B cell (primary cell): ENCODE measurements at regions of chr11 and their contacts with region 1.

Region 1: GRCh38 chr11:67167086-67167485 is 48.0 kb downstream of the KDM2A start:
- DNase-seq: no peak
- ATAC-seq: no peak
- H3K4me3 ChIP-seq: no peak overlapping the region
- H3K4me3 Mint-ChIP-seq: no peak overlapping the region
- H3K27ac ChIP-seq: no peak overlapping the region
- H3K27ac Mint-ChIP-seq: no peak overlapping the region
- H3K4me1 ChIP-seq: peaks cover 4 to 7% of the 10 kb centered on the region in 2 donors
- H3K4me1 Mint-ChIP-seq: peaks cover 43% of the 10 kb centered on the region
- H3K27me3 ChIP-seq: no peaks in the 10 kb centered on the region
- H3K27me3 Mint-ChIP-seq: no peaks in the 10 kb centered on the region
- CTCF ChIP-seq: no peak

Region 2: GRCh38 chr11:67095214-67095507 is 71.9 kb before region 1 on chr11:
- CTCF ChIA-PET with region 1: interaction called, 11 read pairs
- POLR2A ChIA-PET with region 1: no interaction called
- intact Hi-C with region 1: no loop called
- DNase-seq: no peak
- ATAC-seq: no peak
- H3K4me3 ChIP-seq: no peak overlapping the region
- H3K4me3 Mint-ChIP-seq: no peak overlapping the region
- H3K27ac ChIP-seq: no peak overlapping the region
- H3K27ac Mint-ChIP-seq: no peak overlapping the region
- H3K4me1 ChIP-seq: peaks cover 0 to 6% of the 10 kb centered on the region in 2 donors
- H3K4me1 Mint-ChIP-seq: peaks cover 9% of the 10 kb centered on the region
- H3K27me3 ChIP-seq: no peaks in the 10 kb centered on the region
- H3K27me3 Mint-ChIP-seq: no peaks in the 10 kb centered on the region
- CTCF ChIP-seq: no peak